ENCODE measurements at regions of chr16 and their contacts with region 1.

Region 1: DNA sequence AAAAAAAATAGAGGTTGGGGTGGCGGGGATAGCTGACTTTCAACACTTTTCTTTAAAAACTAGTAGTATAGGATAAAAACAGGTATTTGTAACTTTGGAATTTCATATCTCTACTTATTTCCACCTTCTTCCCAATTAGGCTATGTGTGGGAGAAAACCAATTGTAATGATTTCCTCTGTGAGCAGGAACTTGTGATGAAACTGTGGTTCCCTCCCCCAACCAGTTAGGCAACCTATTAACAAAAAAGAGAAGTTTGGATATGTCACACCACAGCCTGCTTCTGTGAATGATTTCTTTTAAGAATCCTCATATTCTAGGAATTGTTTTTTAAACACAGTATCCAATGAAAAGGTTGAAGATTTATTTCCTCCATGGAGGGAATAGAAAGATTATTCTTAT is 1.9 kb downstream of the IGSF6 start:
- DNase-seq: peak; percentile 85 to 94 (median 93)
- H3K4me3 ChIP-seq: peak overlapping the region; percentile 81 to 98 (median 92)
- H3K4me3 Mint-ChIP-seq: peak overlapping the region; percentile 86 to 92
- H3K27ac ChIP-seq: peak overlapping the region; percentile 77 to 98
- H3K27ac Mint-ChIP-seq: peak overlapping the region; percentile 93 to 98 (median 97)
- H3K4me1 ChIP-seq: peaks cover 76 to 79% of the 10 kb centered on the region in 2 donors
- H3K4me1 Mint-ChIP-seq: peaks cover 79% of the 10 kb centered on the region
- H3K27me3 ChIP-seq: no peaks in the 10 kb centered on the region
- H3K27me3 Mint-ChIP-seq: no peaks in the 10 kb centered on the region
- CTCF ChIP-seq: no peak

Region 2: GRCh38 chr16:21611546-21612384 is 38.8 kb before region 1 on chr16:
- intact Hi-C with region 1: loop called in 1 of 2 experiments (anchors 5 kb)
- DNase-seq: peak; percentile 44 to 73 (median 61)
- H3K4me3 ChIP-seq: peak overlapping the region in 2 of 3 experiments; percentile 39 to 63
- H3K4me3 Mint-ChIP-seq: peak overlapping the region; percentile 60 to 82
- H3K27ac ChIP-seq: peak overlapping the region; percentile 93 to 95
- H3K27ac Mint-ChIP-seq: peak overlapping the region; percentile 95 to 98 (median 97)
- H3K4me1 ChIP-seq: peaks cover 99 to 100% of the 10 kb centered on the region in 2 donors
- H3K4me1 Mint-ChIP-seq: peaks cover 96% of the 10 kb centered on the region
- H3K27me3 ChIP-seq: no peaks in the 10 kb centered on the region
- H3K27me3 Mint-ChIP-seq: no peaks in the 10 kb centered on the region
- CTCF ChIP-seq: no peak

Region 3: DNA sequence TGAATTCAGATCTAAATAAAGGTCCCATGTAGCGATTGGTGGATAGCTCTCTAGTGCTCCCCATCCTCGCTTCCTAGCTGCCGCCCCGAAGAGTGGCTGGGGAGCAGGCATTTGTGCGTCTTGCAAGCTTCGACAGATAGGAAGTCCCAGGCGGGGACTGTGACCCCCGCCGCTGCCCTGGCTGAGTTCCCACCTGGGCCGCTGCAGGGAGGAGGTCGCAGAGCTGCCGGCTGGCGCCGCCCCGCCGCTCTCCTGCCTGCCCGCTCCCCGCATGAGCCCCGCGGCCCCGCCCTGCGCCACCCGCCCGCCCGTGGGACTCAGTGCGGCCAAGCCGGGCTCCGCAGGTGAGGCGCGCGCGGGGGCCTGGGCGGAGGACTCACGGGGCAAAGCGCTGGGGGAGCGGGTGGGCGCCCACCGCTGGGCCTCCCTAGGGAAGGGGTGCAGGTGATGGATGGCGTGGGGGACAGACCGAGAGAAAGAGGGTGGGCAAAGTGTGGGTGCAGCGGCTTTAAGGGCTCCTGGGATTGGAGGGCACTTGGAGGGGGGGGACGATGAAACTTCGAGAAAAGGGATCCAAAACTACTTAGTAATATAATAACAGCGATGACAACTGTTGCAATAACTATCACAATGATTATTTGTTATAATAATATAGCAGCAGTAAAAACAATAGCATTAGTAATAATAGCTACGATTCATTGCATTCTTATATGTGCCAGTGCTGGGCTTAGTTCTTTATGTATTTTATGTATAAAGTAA is 13.5 kb after region 1 on chr16 and contains the start of gene OTOA:
- intact Hi-C with region 1: no loop called
- DNase-seq: no peak
- H3K4me3 ChIP-seq: peak within 1 kb of the TSS in 1 of 3 experiments; percentile 63
- H3K4me3 Mint-ChIP-seq: peak within 1 kb of the TSS; percentile 71 to 90
- H3K27ac ChIP-seq: no peak within 1 kb of the TSS
- H3K27ac Mint-ChIP-seq: no peak within 1 kb of the TSS
- H3K4me1 ChIP-seq: peaks cover 14 to 21% of the 10 kb centered on the region in 2 donors
- H3K4me1 Mint-ChIP-seq: peaks cover 17% of the 10 kb centered on the region
- H3K27me3 ChIP-seq: peaks cover 0 to 4% of the 10 kb centered on the region in 2 donors
- H3K27me3 Mint-ChIP-seq: peaks cover 5 to 13% (median 11%) of the 10 kb centered on the region in 3 donors
- CTCF ChIP-seq: no peak
- polyA plus RNA-seq, gene OTOA: 0.11 to 0.23 (median 0.21) TPM